IMR-90 (cell line): ENCODE measurements at regions of chr16 and their contacts with region 1.

Region 1: GRCh38 chr16:89860747-89861304 is 12.6 kb upstream of the TCF25 start:
- DNase-seq: peak; percentile 17
- ATAC-seq: peak; percentile 96
- H3K4me3 ChIP-seq: no peak overlapping the region
- H3K27ac ChIP-seq: no peak overlapping the region
- H3K4me1 ChIP-seq: peaks cover 6% of the 10 kb centered on the region
- H3K27me3 ChIP-seq: no peaks in the 10 kb centered on the region
- CTCF ChIP-seq: peak; percentile 90
- POLR2A ChIP-seq: 0 out of 2 replicates have a peak, but pooled peaks have one; percentile 30
- RAD21 ChIP-seq: peak; percentile 93

Region 2: GRCh38 chr16:89700100-89700648 is 160.7 kb before region 1 on chr16:
- CTCF ChIA-PET with region 1: interaction called, 19 read pairs
- POLR2A ChIA-PET with region 1: no interaction called
- dilution Hi-C with region 1: no loop called
- in situ Hi-C with region 1: no loop called
- intact Hi-C with region 1: loop called (anchors 2 kb)
- DNase-seq: peak; percentile 97
- ATAC-seq: peak; percentile 78
- H3K4me3 ChIP-seq: peak overlapping the region; percentile 100
- H3K27ac ChIP-seq: no peak overlapping the region
- H3K4me1 ChIP-seq: peaks cover 11% of the 10 kb centered on the region
- H3K27me3 ChIP-seq: no peaks in the 10 kb centered on the region
- CTCF ChIP-seq: peak; percentile 97
- POLR2A ChIP-seq: peak; percentile 30; the same call in 1 of the 2 replicates
- RAD21 ChIP-seq: peak; percentile 73

Region 3: DNA sequence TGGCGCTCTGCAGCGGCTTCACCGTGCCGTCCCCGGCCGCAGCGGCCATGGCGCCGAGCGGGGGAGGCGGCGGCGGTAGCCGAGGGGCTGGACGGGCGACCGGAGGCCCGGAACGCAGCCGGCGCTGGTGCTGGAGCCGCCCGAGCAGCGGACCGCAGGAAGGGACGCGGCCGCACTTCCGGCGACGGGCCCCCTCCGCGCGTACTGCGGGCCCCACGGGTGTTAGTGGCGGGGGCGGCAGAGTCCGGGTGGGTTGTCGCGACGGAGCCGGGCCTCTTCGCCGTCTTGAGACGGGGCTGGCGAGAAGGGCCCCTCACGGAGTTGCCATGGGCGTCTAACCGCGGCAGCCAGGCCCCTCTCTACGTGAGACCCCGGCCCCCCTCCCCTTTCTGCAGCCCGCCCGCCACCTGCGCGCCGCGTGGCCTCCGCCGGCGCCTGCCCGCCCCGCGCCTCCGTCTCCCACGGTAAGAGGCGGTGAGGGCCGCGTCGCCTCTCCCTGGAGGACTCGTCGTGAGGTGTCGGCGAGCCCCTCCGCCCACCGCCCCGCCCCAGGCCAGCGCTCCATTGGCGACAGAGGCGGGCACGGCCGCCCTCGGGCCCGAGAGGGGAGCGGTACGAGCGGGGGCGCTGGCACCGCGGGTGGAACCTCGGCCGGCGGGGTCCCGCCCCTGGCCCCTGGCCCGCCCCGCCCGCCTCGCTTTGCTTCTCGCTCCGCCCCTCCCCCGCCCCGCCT is 139.8 kb before region 1 on chr16 and contains the starts of genes VPS9D1 and ZNF276:
- CTCF ChIA-PET with region 1: no interaction called
- POLR2A ChIA-PET with region 1: no interaction called
- dilution Hi-C with region 1: no loop called
- in situ Hi-C with region 1: no loop called
- intact Hi-C with region 1: loop called (anchors 5 kb)
- DNase-seq: peak; percentile 69
- ATAC-seq: peak; percentile 74
- H3K4me3 ChIP-seq: peak within 1 kb of the TSS; percentile 94
- H3K27ac ChIP-seq: peak within 1 kb of the TSS; percentile 94
- H3K4me1 ChIP-seq: peaks cover 17% of the 10 kb centered on the region
- H3K27me3 ChIP-seq: no peaks in the 10 kb centered on the region
- CTCF ChIP-seq: no peak
- POLR2A ChIP-seq: peak; percentile 67
- RAD21 ChIP-seq: no peak
- total RNA-seq, gene VPS9D1: 1.8 and 1.9 TPM in 2 replicates
- total RNA-seq, gene ZNF276: 4.1 and 4.2 TPM in 2 replicates

Region 4: DNA sequence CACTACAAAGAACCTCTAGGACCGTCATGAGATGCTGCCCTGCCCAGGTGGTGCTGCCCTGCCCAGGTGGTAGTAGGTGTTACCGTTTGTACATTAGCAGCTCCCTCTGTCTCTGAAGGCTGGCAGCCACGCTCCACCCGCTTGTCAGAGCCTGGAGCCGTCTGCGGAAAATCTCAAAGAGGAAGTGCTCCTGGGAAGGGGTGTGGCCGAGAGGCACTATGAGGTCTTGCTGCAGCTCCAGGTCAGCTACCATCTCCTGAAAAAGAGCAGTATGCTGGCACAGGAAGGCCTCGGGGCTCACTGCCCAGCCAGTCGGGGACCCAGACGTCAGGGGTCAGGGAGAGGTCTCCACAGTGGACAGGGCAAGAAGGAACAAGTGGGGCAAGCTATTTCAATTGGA is 111.2 kb before region 1 on chr16:
- CTCF ChIA-PET with region 1: interaction called, 5 read pairs
- POLR2A ChIA-PET with region 1: no interaction called
- dilution Hi-C with region 1: no loop called
- in situ Hi-C with region 1: no loop called
- intact Hi-C with region 1: loop called (anchors 1 kb)
- DNase-seq: no peak
- ATAC-seq: no peak
- H3K4me3 ChIP-seq: no peak overlapping the region
- H3K27ac ChIP-seq: no peak overlapping the region
- H3K4me1 ChIP-seq: no peaks in the 10 kb centered on the region
- H3K27me3 ChIP-seq: no peaks in the 10 kb centered on the region
- CTCF ChIP-seq: no peak
- POLR2A ChIP-seq: no peak
- RAD21 ChIP-seq: no peak

Region 5: GRCh38 chr16:89793955-89794354 is 66.9 kb before region 1 on chr16:
- CTCF ChIA-PET with region 1: interaction called, 4 read pairs
- POLR2A ChIA-PET with region 1: no interaction called
- dilution Hi-C with region 1: no loop called
- in situ Hi-C with region 1: no loop called
- intact Hi-C with region 1: loop called (anchors 2 kb)
- DNase-seq: no peak
- ATAC-seq: no peak
- H3K4me3 ChIP-seq: no peak overlapping the region
- H3K27ac ChIP-seq: no peak overlapping the region
- H3K4me1 ChIP-seq: no peaks in the 10 kb centered on the region
- H3K27me3 ChIP-seq: no peaks in the 10 kb centered on the region
- CTCF ChIP-seq: no peak
- POLR2A ChIP-seq: no peak
- RAD21 ChIP-seq: no peak